Left cardiac atrium (tissue), 4 donors: ENCODE measurements at regions of chr7 and their contacts with region 1.

Region 1: GRCh38 chr7:51187941-51188340 is 128.7 kb downstream of the COBL start:
- DNase-seq: no peak
- ATAC-seq: peak; percentile 65 to 71

Region 2: GRCh38 chr7:51263631-51264484 is 75.9 kb after region 1 on chr7:
- intact Hi-C with region 1: loop called in 1 of 2 experiments (anchors 5 kb)
- DNase-seq: no peak
- ATAC-seq: peak; percentile 13 to 65

Region 3: DNA sequence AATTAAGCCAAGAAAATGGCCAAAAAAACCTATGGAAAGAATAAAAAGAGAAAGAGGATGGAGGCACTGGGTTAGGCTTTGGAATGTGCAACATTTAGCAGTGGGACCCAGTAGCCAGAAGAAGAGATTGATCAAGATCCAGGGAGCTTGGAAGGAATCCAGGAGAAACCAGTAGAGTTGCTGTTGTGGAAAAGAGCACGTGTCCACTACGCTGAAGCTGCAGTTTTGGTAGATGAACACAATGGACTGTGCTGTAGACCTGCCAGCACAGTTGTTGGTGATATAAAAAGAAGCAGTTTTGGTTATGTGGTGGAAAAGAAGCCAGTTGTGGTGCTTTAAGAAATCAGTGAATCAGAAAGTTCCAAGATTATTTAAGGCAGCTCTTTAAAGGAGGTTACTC is 1045.3 kb after region 1 on chr7:
- intact Hi-C with region 1: no loop called
- DNase-seq: no peak
- ATAC-seq: no peak